H1 (cell line): ENCODE measurements at regions of chr16 and their contacts with region 1.

Region 1: GRCh38 chr16:84453061-84453752 is 51.3 kb downstream of the MEAK7 start:
- DNase-seq: no peak
- H3K4me3 ChIP-seq: no peak overlapping the region
- H3K27ac ChIP-seq: no peak overlapping the region
- H3K4me1 ChIP-seq: no peaks in the 10 kb centered on the region; a peak in 1 of 7 replicates
- H3K27me3 ChIP-seq: no peaks in the 10 kb centered on the region
- CTCF ChIP-seq: no peak
- EP300 ChIP-seq: no peak
- POLR2A ChIP-seq: no peak
- RAD21 ChIP-seq: no peak

Region 2: DNA sequence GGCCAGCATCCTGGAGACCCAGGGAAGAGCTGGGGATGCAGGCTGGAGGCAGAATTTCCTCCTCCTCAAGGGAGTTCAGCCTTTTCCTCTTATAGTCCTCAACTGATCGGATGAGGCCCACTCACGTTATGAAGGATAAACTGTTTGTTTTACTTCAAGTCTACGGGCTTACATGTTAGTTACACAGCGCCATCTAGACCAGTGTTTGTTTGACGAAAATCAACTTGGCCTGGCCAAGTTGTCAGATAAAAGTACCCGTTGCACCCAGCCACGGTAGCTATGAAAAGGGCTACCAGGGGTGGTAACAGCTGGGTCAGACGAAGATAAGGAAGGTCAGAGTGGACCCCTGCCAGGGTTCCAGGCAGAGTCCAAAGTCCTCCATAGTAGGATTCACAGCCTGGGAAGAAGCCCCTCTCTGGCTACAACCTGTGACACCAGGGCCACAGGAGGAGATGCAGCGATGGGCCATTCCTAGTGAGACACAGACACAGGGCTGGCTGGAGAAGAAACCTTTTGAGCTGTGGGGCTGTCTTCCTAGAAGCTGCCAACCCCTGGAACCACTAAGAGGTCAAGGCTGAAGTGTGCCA is 11.9 kb after region 1 on chr16:
- CTCF ChIA-PET with region 1: interaction called, 10 read pairs
- POLR2A ChIA-PET with region 1: interaction called, 3 read pairs
- DNase-seq: peak in 1 of 2 experiments; percentile 38
- H3K4me3 ChIP-seq: no peak overlapping the region
- H3K27ac ChIP-seq: no peak overlapping the region
- H3K4me1 ChIP-seq: no peaks in the 10 kb centered on the region
- H3K27me3 ChIP-seq: no peaks in the 10 kb centered on the region
- CTCF ChIP-seq: 0 out of 4 replicates have a peak, but pooled peaks of 1 of the 3 experiments have one; percentile 12
- EP300 ChIP-seq: no peak
- POLR2A ChIP-seq: no peak
- RAD21 ChIP-seq: peak; percentile 24 to 43; a peak in 3 of 4 replicates